ENCODE measurements at regions of chr1 and their contacts with region 1.

Region 1: GRCh38 chr1:26541816-26542711 is 12.5 kb downstream of the RPS6KA1 start:
- DNase-seq: peak; percentile 93
- ATAC-seq: peak; percentile 65
- H3K4me3 Mint-ChIP-seq: peak overlapping the region; percentile 67
- H3K27ac Mint-ChIP-seq: peak overlapping the region; percentile 94
- H3K4me1 Mint-ChIP-seq: peaks cover 83% of the 10 kb centered on the region
- H3K27me3 Mint-ChIP-seq: no peaks in the 10 kb centered on the region

Region 2: GRCh38 chr1:26529655-26530409 is 12.2 kb before region 1 on chr1 and contains the start of gene RPS6KA1:
- CTCF ChIA-PET with region 1: interaction called, 101 read pairs
- POLR2A ChIA-PET with region 1: interaction called, 3 read pairs
- intact Hi-C with region 1: loop called (anchors 1 kb)
- DNase-seq: peak; percentile 78
- ATAC-seq: peak; percentile 88
- H3K4me3 Mint-ChIP-seq: peak within 1 kb of the TSS; percentile 81
- H3K27ac Mint-ChIP-seq: peak within 1 kb of the TSS; percentile 87
- H3K4me1 Mint-ChIP-seq: peaks cover 21% of the 10 kb centered on the region
- H3K27me3 Mint-ChIP-seq: no peaks in the 10 kb centered on the region
- total RNA-seq, gene RPS6KA1: 116 to 160 TPM

Region 3: GRCh38 chr1:26582836-26583460 is 40.9 kb after region 1 on chr1:
- CTCF ChIA-PET with region 1: interaction called, 5 read pairs
- POLR2A ChIA-PET with region 1: interaction called, 3 read pairs
- intact Hi-C with region 1: loop called (anchors 1 kb)
- DNase-seq: peak; percentile 93
- ATAC-seq: peak; percentile 55
- H3K4me3 Mint-ChIP-seq: peak overlapping the region; percentile 35
- H3K27ac Mint-ChIP-seq: peak overlapping the region; percentile 95
- H3K4me1 Mint-ChIP-seq: peaks cover 54% of the 10 kb centered on the region
- H3K27me3 Mint-ChIP-seq: no peaks in the 10 kb centered on the region

Measured in activated CD4-positive, alpha-beta T cell treated with anti-CD3 and anti-CD28 coated beads for 36 hours (primary cell).